Sigmoid colon (tissue), 7 donors: ENCODE measurements at regions of chr5 and their contacts with region 1.

Region 1: DNA sequence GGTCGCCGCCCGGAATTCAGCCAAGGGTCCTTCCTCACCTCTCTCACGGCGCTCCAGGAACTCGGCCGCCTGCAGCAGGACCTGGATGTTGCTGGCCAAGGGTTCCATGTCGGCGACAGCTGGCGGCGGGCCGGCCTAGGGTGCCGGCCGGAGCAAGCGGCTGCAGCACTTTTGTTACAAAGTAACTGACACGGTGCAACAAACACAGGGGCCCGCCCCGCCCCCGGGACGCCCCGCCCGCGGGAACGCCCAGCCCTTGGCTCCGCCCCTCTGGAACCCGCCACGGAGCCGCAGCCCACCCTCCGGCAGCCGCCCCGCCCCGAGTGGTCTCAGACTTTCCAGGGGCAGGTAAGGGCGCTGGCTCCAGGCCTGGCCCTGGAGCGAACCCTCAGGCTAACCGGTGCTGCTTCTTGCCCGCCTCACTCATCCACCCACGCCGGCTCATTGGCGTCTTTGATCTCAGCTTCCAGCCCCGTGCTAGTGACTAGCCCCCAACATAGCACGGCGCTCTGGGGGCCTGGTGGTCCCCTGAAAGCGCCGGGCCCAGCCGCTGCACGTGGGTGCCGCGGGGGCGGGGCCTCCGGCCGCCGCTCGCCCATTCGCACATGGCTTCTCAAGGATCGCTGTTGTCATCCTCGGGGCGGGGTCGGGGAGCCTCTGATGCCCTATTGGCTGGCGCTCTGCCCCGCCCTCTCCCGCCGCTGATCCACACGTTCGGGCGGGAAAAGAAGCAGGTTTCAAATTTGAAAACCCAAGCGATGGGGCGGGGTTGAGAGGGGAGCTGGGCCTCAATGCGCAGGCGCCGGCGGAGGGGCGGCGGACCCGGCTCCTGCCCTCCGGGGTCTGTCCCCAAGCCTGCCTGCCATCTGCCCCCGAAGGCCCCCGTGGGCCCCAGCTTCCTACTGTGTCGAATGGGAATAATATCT is at the start of gene MXD3:
- DNase-seq: peak; percentile 98
- H3K4me3 ChIP-seq: peak within 1 kb of the TSS; percentile 26 to 52 (median 50)
- H3K27ac ChIP-seq: peak within 1 kb of the TSS in 2 of 4 donors; percentile 60 to 68
- H3K4me1 ChIP-seq: peaks cover 0 to 33% (median 25%) of the 10 kb centered on the region in 4 donors
- H3K27me3 ChIP-seq: no peaks in the 10 kb centered on the region
- CTCF ChIP-seq: no peak
- EP300 ChIP-seq: no peak
- POLR2A ChIP-seq: no peak
- total RNA-seq, gene MXD3: 7.2 to 23.8 (median 12.9) TPM

Region 2: DNA sequence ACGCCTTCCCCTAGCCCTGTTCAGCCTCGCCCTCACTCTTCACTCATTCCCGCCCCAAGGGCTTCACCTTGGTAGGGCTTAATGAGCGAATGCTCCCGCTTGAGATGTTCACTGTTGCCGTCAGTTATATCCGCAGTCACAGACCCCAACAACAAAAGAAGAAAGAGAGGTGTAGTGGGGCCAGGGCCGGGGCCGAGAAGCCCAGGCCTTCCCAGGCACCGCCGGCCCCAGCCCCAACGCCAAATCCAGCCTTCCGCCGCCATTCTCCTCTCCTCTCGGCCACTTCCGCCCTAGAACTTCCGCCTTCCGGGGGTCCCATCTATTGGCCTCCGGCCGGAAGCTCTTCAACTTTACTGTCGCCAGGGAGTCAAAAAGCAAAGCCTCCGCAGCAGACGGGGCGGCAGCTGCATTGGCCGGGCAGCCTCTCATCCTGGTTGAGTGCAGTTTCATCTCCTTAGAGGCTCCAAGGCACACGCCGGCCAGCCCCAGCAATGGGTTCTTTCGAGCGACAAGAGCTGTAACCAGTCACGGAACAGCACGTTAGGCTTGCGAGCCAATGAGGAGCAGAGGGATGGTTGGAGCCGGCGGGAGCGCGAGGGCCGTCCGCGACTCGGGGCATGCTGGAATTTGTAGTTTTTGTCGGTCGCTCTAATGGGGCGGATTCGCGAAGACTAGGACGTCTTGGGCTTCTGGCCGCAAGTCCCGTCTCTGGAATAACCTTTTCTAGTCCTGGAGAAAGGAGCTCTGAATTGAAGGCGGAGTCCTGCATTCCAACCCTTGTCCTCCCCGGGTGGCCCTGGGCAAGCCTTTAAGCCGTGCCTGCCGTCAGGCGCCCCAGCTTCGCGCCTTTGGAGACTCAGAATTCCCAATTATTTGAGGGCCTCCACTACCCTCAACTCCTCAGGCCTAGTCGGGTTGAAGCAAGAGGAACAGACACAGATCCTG is 39.7 kb after region 1 on chr5 and contains the start of gene LMAN2:
- intact Hi-C with region 1: loop called (anchors 2 kb)
- DNase-seq: peak; percentile 96
- H3K4me3 ChIP-seq: peak within 1 kb of the TSS; percentile 59 to 93 (median 83)
- H3K27ac ChIP-seq: peak within 1 kb of the TSS; percentile 89 to 96 (median 92)
- H3K4me1 ChIP-seq: peaks cover 0 to 51% (median 34%) of the 10 kb centered on the region in 4 donors
- H3K27me3 ChIP-seq: no peaks in the 10 kb centered on the region
- CTCF ChIP-seq: no peak
- EP300 ChIP-seq: no peak
- POLR2A ChIP-seq: peak; percentile 46 to 70
- total RNA-seq, gene LMAN2: 87.5 to 169 (median 98.2) TPM

Region 3: GRCh38 chr5:177368869-177369644 is 57.1 kb after region 1 on chr5:
- intact Hi-C with region 1: loop called (anchors 5 kb)
- DNase-seq: no peak
- H3K4me3 ChIP-seq: no peak overlapping the region
- H3K27ac ChIP-seq: no peak overlapping the region
- H3K4me1 ChIP-seq: peaks cover 0 to 46% (median 32%) of the 10 kb centered on the region in 4 donors
- H3K27me3 ChIP-seq: no peaks in the 10 kb centered on the region
- CTCF ChIP-seq: peak in 3 of 4 experiments; percentile 21 to 52 (median 46)
- EP300 ChIP-seq: no peak
- POLR2A ChIP-seq: no peak

Region 4: GRCh38 chr5:177425801-177426565 is 114.0 kb after region 1 on chr5:
- intact Hi-C with region 1: no loop called
- DNase-seq: peak; percentile 100
- H3K4me3 ChIP-seq: peak overlapping the region; percentile 40 to 53 (median 52)
- H3K27ac ChIP-seq: peak overlapping the region; percentile 89 to 95 (median 92)
- H3K4me1 ChIP-seq: peaks cover 0 to 37% (median 32%) of the 10 kb centered on the region in 4 donors
- H3K27me3 ChIP-seq: no peaks in the 10 kb centered on the region
- CTCF ChIP-seq: no peak
- EP300 ChIP-seq: no peak
- POLR2A ChIP-seq: peak; percentile 72 to 91

Region 5: DNA sequence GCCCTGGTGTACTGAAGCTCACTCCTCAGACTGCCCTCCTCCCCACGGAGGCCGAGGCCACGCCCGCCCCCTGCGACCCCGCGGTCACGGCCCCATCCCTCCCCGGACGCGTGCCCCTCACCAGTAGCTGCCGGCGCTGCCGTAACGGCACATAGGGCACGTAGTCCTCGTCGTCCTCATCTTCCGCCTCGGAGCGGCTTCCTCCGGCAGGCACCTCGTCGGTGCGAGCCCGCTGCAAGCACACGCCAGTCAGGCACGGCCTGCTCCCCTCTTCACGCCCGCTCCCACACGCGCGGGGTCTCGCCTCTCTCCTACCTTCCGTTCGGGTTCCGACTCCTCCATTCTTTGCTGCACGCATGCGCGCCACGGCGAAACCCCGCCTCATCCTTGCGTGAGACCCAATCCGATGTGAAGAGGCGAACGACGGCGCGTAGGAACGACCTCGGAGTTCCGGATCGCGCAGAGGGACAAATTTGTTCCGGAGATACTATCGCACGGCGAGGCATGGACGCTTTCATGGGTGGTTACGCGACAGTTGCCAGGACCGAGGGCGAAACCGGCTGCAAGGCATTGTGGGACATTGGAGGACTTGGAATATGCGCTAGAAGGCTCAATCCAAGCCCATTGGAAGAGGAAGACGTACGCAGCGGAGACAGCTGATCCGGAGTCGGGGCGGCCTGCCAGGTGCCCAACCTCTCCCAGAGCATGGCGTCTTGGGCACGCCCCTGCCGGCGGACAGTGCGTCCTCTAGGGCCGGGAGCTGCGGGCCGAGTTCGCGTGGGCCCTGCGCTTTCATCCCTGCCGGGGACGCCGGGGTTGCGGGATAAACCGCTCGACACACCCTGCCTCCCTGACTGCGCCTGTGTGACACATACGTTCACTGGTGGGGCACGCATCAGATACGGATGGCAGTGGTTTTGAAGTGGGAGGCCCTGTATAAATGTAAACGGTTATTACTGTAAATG is 204.9 kb after region 1 on chr5 and contains the start of gene DDX41:
- intact Hi-C with region 1: loop called (anchors 10 kb)
- DNase-seq: peak; percentile 99
- H3K4me3 ChIP-seq: peak within 1 kb of the TSS; percentile 64 to 90 (median 84)
- H3K27ac ChIP-seq: peak within 1 kb of the TSS; percentile 85 to 89 (median 86)
- H3K4me1 ChIP-seq: peaks cover 0 to 35% (median 16%) of the 10 kb centered on the region in 4 donors
- H3K27me3 ChIP-seq: no peaks in the 10 kb centered on the region
- CTCF ChIP-seq: no peak
- EP300 ChIP-seq: peak in 1 of 4 donors; percentile 71
- POLR2A ChIP-seq: no peak
- total RNA-seq, gene DDX41: 47.8 to 55.1 (median 51.6) TPM